ENCODE measurements at regions of chr10 and their contacts with region 1.

Region 1: DNA sequence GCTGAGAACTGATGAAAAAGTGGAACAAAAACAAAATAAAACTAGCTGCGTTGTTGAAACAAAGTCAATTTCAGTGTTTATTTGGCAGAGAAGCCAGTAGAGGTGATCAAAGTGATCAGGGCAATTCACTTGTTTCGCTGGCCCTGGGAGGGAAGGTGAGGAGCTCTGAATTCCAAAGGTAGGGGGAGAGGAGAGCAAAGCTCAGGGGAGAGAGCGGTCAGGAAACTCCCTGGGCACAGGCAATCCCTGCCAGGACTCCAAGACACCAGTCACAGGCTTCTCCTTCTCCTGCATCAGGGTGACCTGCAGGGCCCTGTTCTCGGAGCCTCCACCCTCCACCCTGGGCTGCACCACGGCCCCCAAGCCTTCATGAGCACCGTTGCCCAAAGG is 6.8 kb upstream of the KIAA1217 start:
- DNase-seq: no peak
- H3K4me3 ChIP-seq: 0 out of 8 replicates have a peak overlapping the region, but pooled peaks of 1 of the 4 experiments have one; percentile 16
- H3K27ac ChIP-seq: no peak overlapping the region
- H3K4me1 ChIP-seq: peaks cover 3 to 12% (median 8%) of the 10 kb centered on the region in 4 experiments
- H3K27me3 ChIP-seq: no peaks in the 10 kb centered on the region
- CTCF ChIP-seq: no peak
- EP300 ChIP-seq: no peak
- POLR2A ChIP-seq: no peak
- RAD21 ChIP-seq: no peak

Region 2: DNA sequence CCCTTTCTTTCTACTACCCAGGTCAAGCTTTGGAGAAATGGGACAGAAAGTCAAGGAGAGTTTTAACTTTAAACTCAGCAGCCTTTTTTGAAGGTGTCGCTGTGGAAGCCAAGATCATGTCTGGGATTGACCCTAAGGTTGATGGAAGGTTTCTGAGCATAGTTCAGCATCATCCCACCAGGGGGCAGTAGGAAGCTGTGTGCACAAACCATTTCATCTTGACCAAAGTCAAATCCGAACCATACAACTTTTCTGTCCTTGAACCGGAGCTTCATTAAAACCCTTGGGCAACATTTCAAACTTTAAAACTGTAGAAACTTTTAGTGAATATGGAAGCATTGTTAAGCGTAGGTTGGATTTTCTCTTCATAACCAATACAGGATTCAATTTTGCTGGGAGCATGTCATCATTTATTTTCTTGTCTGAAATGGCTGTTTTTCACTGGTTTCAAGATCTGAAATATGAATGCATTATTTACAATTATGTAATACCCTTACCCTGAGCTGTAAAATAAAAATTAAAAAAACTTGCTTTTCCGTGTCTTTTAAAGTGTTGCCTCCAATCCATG is 207.6 kb before region 1 on chr10:
- CTCF ChIA-PET with region 1: interaction called, 62 read pairs
- POLR2A ChIA-PET with region 1: no interaction called
- DNase-seq: peak; percentile 27 to 84
- H3K4me3 ChIP-seq: no peak overlapping the region
- H3K27ac ChIP-seq: no peak overlapping the region
- H3K4me1 ChIP-seq: no peaks in the 10 kb centered on the region
- H3K27me3 ChIP-seq: no peaks in the 10 kb centered on the region
- CTCF ChIP-seq: peak; percentile 40 to 86 (median 78)
- EP300 ChIP-seq: no peak
- POLR2A ChIP-seq: no peak
- RAD21 ChIP-seq: peak; percentile 94

Region 3: DNA sequence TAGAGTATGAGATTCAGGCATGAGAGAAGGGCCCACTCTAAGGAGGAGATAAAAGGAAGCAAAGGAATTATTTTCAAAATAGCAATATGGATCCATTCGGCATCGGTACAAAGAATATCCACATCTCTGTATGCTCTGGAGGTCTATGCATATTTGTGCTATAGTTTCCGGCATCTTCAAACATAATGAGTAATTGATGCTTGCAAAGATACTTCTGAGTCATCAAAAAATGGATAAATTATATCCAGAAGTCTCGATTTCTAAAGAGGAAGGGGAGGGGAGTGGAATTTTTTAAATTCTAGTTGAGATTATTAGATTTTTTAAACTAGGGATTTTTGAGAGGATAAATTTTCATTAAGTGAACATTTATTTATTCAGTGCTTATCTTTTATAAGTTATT is 66.1 kb before region 1 on chr10:
- CTCF ChIA-PET with region 1: no interaction called
- POLR2A ChIA-PET with region 1: no interaction called
- DNase-seq: no peak
- H3K4me3 ChIP-seq: no peak overlapping the region
- H3K27ac ChIP-seq: no peak overlapping the region
- H3K4me1 ChIP-seq: no peaks in the 10 kb centered on the region
- H3K27me3 ChIP-seq: no peaks in the 10 kb centered on the region
- CTCF ChIP-seq: no peak
- EP300 ChIP-seq: no peak
- POLR2A ChIP-seq: no peak
- RAD21 ChIP-seq: no peak

Region 4: GRCh38 chr10:24184455-24184854 is 17.7 kb before region 1 on chr10:
- CTCF ChIA-PET with region 1: interaction called, 11 read pairs
- POLR2A ChIA-PET with region 1: no interaction called
- DNase-seq: no peak
- H3K4me3 ChIP-seq: no peak overlapping the region
- H3K27ac ChIP-seq: no peak overlapping the region
- H3K4me1 ChIP-seq: no peaks in the 10 kb centered on the region
- H3K27me3 ChIP-seq: no peaks in the 10 kb centered on the region
- CTCF ChIP-seq: no peak
- EP300 ChIP-seq: no peak
- POLR2A ChIP-seq: no peak
- RAD21 ChIP-seq: no peak

Region 5: GRCh38 chr10:24215196-24215595 is 13.0 kb after region 1 on chr10:
- CTCF ChIA-PET with region 1: interaction called, 10 read pairs
- POLR2A ChIA-PET with region 1: interaction called, 6 read pairs
- DNase-seq: no peak
- H3K4me3 ChIP-seq: no peak overlapping the region
- H3K27ac ChIP-seq: no peak overlapping the region
- H3K4me1 ChIP-seq: peaks cover 3 to 19% (median 10%) of the 10 kb centered on the region in 4 experiments; a peak in 5 of 7 replicates
- H3K27me3 ChIP-seq: no peaks in the 10 kb centered on the region
- CTCF ChIP-seq: no peak
- EP300 ChIP-seq: no peak
- POLR2A ChIP-seq: no peak
- RAD21 ChIP-seq: no peak